Left colon (tissue), 2 donors: ENCODE measurements at regions of chr10 and their contacts with region 1.

Region 1: GRCh38 chr10:61284222-61284890 is 168.8 kb downstream of the TMEM26 start:
- DNase-seq: no peak
- ATAC-seq: peak; percentile 44

Region 2: DNA sequence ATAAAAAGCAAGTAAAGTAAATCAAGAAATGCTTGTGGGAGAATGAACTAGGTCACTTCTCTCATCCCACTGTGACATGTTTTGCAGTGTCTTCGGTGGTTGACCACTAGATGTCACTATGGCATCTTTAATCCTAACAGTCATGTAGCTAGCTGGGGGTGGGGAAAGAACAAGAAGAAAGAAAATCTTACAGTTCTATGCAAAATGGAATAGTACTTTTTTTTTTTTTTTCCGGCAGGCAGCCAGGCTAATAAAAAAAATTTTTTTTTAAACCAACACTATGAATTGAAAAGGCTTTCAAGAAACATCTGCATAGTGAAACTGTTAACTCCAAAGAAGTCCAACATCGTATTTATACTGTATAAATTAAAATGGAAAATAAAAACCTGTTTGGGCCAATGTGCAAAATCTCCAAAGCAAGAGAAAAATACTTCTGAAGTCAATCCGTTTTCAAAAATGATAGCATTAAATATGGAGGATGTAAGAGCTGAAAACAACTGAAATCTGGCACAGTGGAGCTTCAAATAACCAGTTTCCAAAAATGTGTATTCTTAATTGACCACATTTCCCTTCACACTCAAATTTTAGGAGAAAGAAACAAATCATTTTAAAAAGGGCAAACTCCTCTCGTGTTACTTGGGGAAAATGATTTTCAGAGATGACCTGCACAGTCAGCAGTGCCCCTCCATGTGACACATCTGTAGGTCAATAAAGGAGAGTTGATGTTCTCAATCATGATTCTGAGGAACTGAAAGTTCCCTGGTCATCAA is 467.5 kb before region 1 on chr10:
- intact Hi-C with region 1: loop called in 1 of 2 experiments (anchors 5 kb)
- DNase-seq: peak in 1 of 2 donors; percentile 12
- ATAC-seq: peak; percentile 82

Region 3: GRCh38 chr10:61140765-61141392 is 143.5 kb before region 1 on chr10:
- intact Hi-C with region 1: loop called in 1 of 2 experiments (anchors 5 kb)
- DNase-seq: no peak
- ATAC-seq: peak; percentile 58